ENCODE measurements at regions of chr19 and their contacts with region 1.

Region 1: DNA sequence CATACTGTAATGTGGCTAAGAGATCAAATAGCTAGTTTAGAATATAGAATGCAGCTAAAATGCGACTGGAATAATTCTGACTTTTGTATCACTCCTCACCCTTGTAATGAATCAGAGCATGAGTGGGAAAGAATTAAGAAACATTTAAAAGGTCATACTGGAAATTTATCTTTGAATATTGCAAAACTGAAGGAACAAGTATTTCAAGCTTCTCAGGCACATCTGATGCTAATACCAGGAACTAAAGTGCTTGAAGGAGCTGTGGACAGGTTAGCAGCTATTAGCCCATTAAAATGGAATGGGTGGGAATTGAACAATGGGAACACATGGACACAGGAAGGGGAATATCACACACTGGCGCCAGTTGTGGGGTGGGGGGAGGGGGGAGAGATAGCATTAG is 144.2 kb upstream of the ZNF91 start:
- DNase-seq: no peak
- H3K4me3 ChIP-seq: no peak overlapping the region
- H3K27ac ChIP-seq: no peak overlapping the region
- H3K4me1 ChIP-seq: peaks cover 10% of the 10 kb centered on the region
- H3K27me3 ChIP-seq: no peaks in the 10 kb centered on the region
- CTCF ChIP-seq: no peak

Region 2: DNA sequence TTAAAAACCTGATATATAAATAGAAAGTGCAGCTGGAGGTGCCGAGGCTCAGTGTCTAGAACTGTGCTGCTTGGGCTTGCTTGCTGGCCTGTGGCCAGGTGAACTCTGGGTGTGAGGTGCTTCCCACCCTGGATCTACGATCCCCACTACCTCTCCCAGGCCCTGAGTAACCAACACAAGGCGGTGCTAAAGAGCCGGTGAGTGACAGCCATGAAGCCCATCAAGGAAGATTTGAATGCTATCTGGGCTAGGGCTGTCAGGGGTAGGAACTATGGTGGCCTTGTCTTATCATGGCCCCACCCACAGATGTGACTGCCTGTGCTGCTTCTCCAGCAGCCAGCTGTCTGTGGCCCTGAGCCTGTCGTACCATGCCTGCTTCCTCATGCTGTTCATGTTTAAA is 118.7 kb before region 1 on chr19:
- CTCF ChIA-PET with region 1: no interaction called
- dilution Hi-C with region 1: no loop called
- in situ Hi-C with region 1: no loop called
- intact Hi-C with region 1: no loop called
- DNase-seq: no peak
- H3K4me3 ChIP-seq: no peak overlapping the region
- H3K27ac ChIP-seq: no peak overlapping the region
- H3K4me1 ChIP-seq: peaks cover 2% of the 10 kb centered on the region
- H3K27me3 ChIP-seq: no peaks in the 10 kb centered on the region
- CTCF ChIP-seq: no peak

Region 3: GRCh38 chr19:23491421-23491820 is 48.1 kb before region 1 on chr19:
- CTCF ChIA-PET with region 1: no interaction called
- dilution Hi-C with region 1: loop called (anchors 5 kb)
- in situ Hi-C with region 1: no loop called
- intact Hi-C with region 1: no loop called
- DNase-seq: no peak
- H3K4me3 ChIP-seq: no peak overlapping the region
- H3K27ac ChIP-seq: no peak overlapping the region
- H3K4me1 ChIP-seq: no peaks in the 10 kb centered on the region
- H3K27me3 ChIP-seq: no peaks in the 10 kb centered on the region
- CTCF ChIP-seq: no peak

Region 4: DNA sequence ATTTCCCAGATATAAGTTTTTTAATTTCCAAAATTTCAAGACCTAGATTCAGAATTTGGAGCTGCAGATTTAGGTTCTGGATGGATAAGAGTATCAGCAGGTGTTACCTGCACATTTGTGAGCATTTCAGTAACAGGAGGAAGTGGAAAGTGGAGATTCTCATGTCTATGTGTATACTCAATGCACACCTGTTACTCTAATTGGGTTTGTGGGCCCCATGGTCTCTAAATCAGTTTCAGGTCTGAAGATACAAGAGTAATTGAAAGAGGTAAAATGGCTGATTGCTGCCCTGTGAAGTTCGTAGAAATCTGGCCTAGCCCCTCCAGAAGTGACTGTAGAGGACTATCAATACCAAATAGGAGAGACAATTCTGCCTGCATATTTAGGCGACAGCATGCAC is 133.6 kb after region 1 on chr19:
- CTCF ChIA-PET with region 1: no interaction called
- dilution Hi-C with region 1: no loop called
- in situ Hi-C with region 1: no loop called
- intact Hi-C with region 1: no loop called
- DNase-seq: no peak
- H3K4me3 ChIP-seq: no peak overlapping the region
- H3K27ac ChIP-seq: no peak overlapping the region
- H3K4me1 ChIP-seq: no peaks in the 10 kb centered on the region
- H3K27me3 ChIP-seq: no peaks in the 10 kb centered on the region
- CTCF ChIP-seq: no peak